Breast epithelium (tissue), 4 donors: ENCODE measurements at regions of chr5 and their contacts with region 1.

Region 1: DNA sequence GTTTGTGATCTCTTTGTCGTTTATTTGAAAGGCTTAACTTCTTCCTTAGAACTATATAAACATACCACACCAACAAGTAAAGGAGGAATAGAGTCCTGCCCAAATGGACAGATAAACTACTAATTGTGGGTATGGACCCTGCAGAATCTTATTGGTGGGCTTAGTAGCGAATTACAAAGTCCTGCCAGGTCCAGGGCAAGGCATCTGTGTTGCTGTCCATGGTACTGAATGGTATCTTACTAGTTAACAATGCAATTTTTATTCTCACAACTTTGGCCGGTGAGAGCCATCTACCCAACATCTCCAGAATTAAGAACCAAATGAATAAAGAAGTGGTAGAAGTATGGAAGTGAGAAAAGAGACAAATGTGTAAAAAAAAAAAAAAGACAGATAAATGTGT is 1782.4 kb upstream of the WWC1 start:
- DNase-seq: no peak
- H3K4me3 ChIP-seq: no peak overlapping the region
- H3K27ac ChIP-seq: no peak overlapping the region
- H3K4me1 ChIP-seq: no peaks in the 10 kb centered on the region
- H3K27me3 ChIP-seq: no peaks in the 10 kb centered on the region
- CTCF ChIP-seq: no peak
- POLR2A ChIP-seq: no peak

Region 2: GRCh38 chr5:165521816-165522610 is 987.1 kb before region 1 on chr5:
- intact Hi-C with region 1: loop called (anchors 5 kb)
- DNase-seq: no peak
- H3K4me3 ChIP-seq: no peak overlapping the region
- H3K27ac ChIP-seq: no peak overlapping the region
- H3K4me1 ChIP-seq: no peaks in the 10 kb centered on the region
- H3K27me3 ChIP-seq: no peaks in the 10 kb centered on the region
- CTCF ChIP-seq: no peak
- POLR2A ChIP-seq: no peak